HepG2 (cell line): ENCODE measurements at regions of chr19 and their contacts with region 1.

Region 1: GRCh38 chr19:41998246-41999020 is 4.4 kb upstream of the ATP1A3 start:
- DNase-seq: peak; percentile 17
- ATAC-seq: peak; percentile 57
- H3K4me3 ChIP-seq: no peak overlapping the region
- H3K27ac ChIP-seq: no peak overlapping the region
- H3K4me1 ChIP-seq: no peaks in the 10 kb centered on the region
- H3K27me3 ChIP-seq: peaks cover 7 to 66% of the 10 kb centered on the region in 2 experiments; a peak in 4 of 5 replicates
- CTCF ChIP-seq: peak; percentile 67
- EP300 ChIP-seq: no peak
- POLR2A ChIP-seq: no peak
- RAD21 ChIP-seq: peak; percentile 73

Region 2: GRCh38 chr19:41945135-41945766 is 53.2 kb before region 1 on chr19:
- CTCF ChIA-PET with region 1: no interaction called
- POLR2A ChIA-PET with region 1: no interaction called
- in situ Hi-C with region 1: no loop called
- intact Hi-C with region 1: no loop called
- DNase-seq: no peak
- ATAC-seq: no peak
- H3K4me3 ChIP-seq: no peak overlapping the region
- H3K27ac ChIP-seq: no peak overlapping the region
- H3K4me1 ChIP-seq: no peaks in the 10 kb centered on the region
- H3K27me3 ChIP-seq: peaks cover 4 to 18% of the 10 kb centered on the region in 2 experiments; a peak in 3 of 5 replicates
- CTCF ChIP-seq: no peak
- EP300 ChIP-seq: no peak
- POLR2A ChIP-seq: no peak
- RAD21 ChIP-seq: no peak

Region 3: GRCh38 chr19:41959056-41960053 is 39.1 kb before region 1 on chr19 and contains the start of gene RABAC1:
- CTCF ChIA-PET with region 1: no interaction called
- POLR2A ChIA-PET with region 1: no interaction called
- in situ Hi-C with region 1: no loop called
- intact Hi-C with region 1: no loop called
- DNase-seq: peak; percentile 83
- ATAC-seq: peak; percentile 88
- H3K4me3 ChIP-seq: peak within 1 kb of the TSS; percentile 95 to 99 (median 98)
- H3K27ac ChIP-seq: peak within 1 kb of the TSS; percentile 73
- H3K4me1 ChIP-seq: peaks cover 32% of the 10 kb centered on the region
- H3K27me3 ChIP-seq: no peaks in the 10 kb centered on the region; a peak in 1 of 5 replicates
- CTCF ChIP-seq: peak; percentile 42
- EP300 ChIP-seq: 0 out of 4 replicates have a peak, but pooled peaks of 1 of the 2 experiments have one; percentile 36
- POLR2A ChIP-seq: peak; percentile 13 to 59; a peak in 3 of 4 replicates
- RAD21 ChIP-seq: no peak
- total RNA-seq, gene RABAC1: 20.7 and 37.4 TPM in 2 replicates

Region 4: GRCh38 chr19:41978470-41978869 is 20.0 kb before region 1 on chr19:
- CTCF ChIA-PET with region 1: no interaction called
- POLR2A ChIA-PET with region 1: no interaction called
- in situ Hi-C with region 1: no loop called
- intact Hi-C with region 1: no loop called
- DNase-seq: no peak
- ATAC-seq: no peak
- H3K4me3 ChIP-seq: no peak overlapping the region
- H3K27ac ChIP-seq: no peak overlapping the region
- H3K4me1 ChIP-seq: no peaks in the 10 kb centered on the region
- H3K27me3 ChIP-seq: peaks cover 1 to 20% of the 10 kb centered on the region in 2 experiments; a peak in 3 of 5 replicates
- CTCF ChIP-seq: no peak
- EP300 ChIP-seq: no peak
- POLR2A ChIP-seq: no peak
- RAD21 ChIP-seq: no peak

Region 5: GRCh38 chr19:42010245-42011126 is 12.1 kb after region 1 on chr19:
- CTCF ChIA-PET with region 1: no interaction called
- POLR2A ChIA-PET with region 1: no interaction called
- in situ Hi-C with region 1: no loop called
- intact Hi-C with region 1: no loop called
- DNase-seq: no peak
- ATAC-seq: no peak
- H3K4me3 ChIP-seq: no peak overlapping the region
- H3K27ac ChIP-seq: no peak overlapping the region
- H3K4me1 ChIP-seq: no peaks in the 10 kb centered on the region
- H3K27me3 ChIP-seq: peaks cover 3 to 13% of the 10 kb centered on the region in 2 experiments; a peak in 4 of 5 replicates
- CTCF ChIP-seq: no peak
- EP300 ChIP-seq: no peak
- POLR2A ChIP-seq: no peak
- RAD21 ChIP-seq: no peak

Region 6: DNA sequence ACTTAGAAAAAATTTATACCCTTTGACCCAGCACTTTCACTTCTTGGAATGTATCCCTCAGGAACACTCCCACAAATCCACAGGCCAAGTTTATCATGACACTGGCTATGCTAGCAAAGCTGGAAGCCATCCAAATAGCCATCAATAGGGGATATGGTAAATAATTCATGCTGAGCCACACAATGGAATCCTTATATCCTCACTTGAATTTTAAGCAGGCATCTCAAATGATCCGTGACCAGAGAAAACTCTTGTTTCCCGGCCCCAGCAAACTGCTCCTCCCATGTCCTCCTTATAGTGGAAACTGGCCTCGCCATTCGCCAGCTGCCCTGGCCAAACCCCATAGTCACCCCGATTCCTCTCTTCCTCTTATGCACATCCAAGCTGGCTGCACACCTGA is 34.0 kb after region 1 on chr19:
- CTCF ChIA-PET with region 1: interaction called, 3 read pairs
- POLR2A ChIA-PET with region 1: no interaction called
- in situ Hi-C with region 1: no loop called
- intact Hi-C with region 1: loop called (anchors 2 kb)
- DNase-seq: no peak
- ATAC-seq: no peak
- H3K4me3 ChIP-seq: no peak overlapping the region
- H3K27ac ChIP-seq: no peak overlapping the region
- H3K4me1 ChIP-seq: no peaks in the 10 kb centered on the region
- H3K27me3 ChIP-seq: peaks cover 0 to 15% of the 10 kb centered on the region in 2 experiments; a peak in 2 of 5 replicates
- CTCF ChIP-seq: no peak
- EP300 ChIP-seq: no peak
- POLR2A ChIP-seq: no peak
- RAD21 ChIP-seq: no peak